Naive thymus-derived CD4-positive, alpha-beta T cell (primary cell): ENCODE measurements at regions of chr22 and their contacts with region 1.

Region 1: DNA sequence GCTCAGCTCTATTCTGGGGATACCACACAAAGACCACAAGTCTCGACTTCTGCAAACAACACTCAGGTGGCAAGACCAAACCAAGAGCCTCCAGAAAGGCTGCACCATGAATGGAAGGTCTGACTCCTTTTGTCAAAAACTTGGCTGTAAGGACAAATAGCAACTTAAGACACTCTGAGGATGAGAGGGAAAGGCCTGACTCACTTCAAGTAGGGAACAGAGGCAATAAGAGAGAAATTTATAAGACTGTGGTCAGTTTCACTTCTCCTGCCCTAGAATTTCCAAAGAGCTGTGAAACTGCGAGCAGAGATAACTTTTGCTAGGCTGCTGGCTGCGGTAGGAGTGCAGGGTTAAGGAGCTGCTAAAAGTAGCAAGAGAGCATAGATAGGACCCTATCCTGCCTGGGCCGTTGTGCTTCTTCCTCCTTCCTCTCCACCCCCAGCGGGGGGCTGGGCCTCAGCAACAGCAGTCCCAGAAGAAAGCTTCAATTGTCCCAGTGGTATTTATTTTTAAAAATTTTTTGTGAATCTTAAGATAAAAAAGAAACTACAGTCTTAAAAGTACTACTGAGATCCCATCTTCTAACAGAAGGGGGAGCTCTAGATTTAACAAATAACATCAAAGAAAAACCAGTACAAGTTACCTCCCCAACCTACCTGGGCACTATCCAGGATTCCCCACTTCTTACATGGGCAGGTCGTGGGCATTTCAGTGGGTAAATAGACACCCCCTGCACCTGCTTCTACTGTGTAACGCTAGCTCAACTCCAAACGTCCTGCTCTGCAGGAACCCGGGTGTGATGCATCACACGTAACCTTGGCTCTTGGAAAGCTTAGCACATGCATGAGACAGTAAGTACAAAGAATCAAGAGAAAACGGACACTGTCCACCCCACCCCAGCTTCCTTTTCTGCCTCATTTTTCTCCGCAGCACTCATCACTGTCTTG is 66.4 kb downstream of the SGSM3 start:
- DNase-seq: peak in 7 of 9 donors; percentile 51 to 73 (median 65)
- ATAC-seq: peak; percentile 79
- H3K4me3 ChIP-seq: no peak overlapping the region
- H3K4me3 Mint-ChIP-seq: peak overlapping the region in 7 of 10 donors; percentile 7 to 73 (median 39)
- H3K27ac ChIP-seq: peak overlapping the region; percentile 24
- H3K27ac Mint-ChIP-seq: peak overlapping the region; percentile 0 to 88 (median 68)
- H3K4me1 ChIP-seq: peaks cover 10 to 23% of the 10 kb centered on the region in 2 donors
- H3K4me1 Mint-ChIP-seq: peaks cover 28 to 77% (median 62%) of the 10 kb centered on the region in 7 donors
- H3K27me3 ChIP-seq: no peaks in the 10 kb centered on the region
- H3K27me3 Mint-ChIP-seq: no peaks in the 10 kb centered on the region

Region 2: GRCh38 chr22:40107851-40108378 is 328.9 kb before region 1 on chr22:
- CTCF ChIA-PET with region 1: no interaction called
- POLR2A ChIA-PET with region 1: no interaction called
- intact Hi-C with region 1: no loop called
- DNase-seq: peak in 2 of 9 donors; percentile 19 to 32
- ATAC-seq: peak; percentile 65
- H3K4me3 ChIP-seq: peak overlapping the region; percentile 16
- H3K4me3 Mint-ChIP-seq: peak overlapping the region; percentile 65 to 91 (median 85)
- H3K27ac ChIP-seq: peak overlapping the region; percentile 63
- H3K27ac Mint-ChIP-seq: peak overlapping the region; percentile 36 to 94 (median 83)
- H3K4me1 ChIP-seq: peaks cover 34 to 45% of the 10 kb centered on the region in 2 donors
- H3K4me1 Mint-ChIP-seq: peaks cover 56 to 95% (median 91%) of the 10 kb centered on the region in 7 donors
- H3K27me3 ChIP-seq: no peaks in the 10 kb centered on the region
- H3K27me3 Mint-ChIP-seq: no peaks in the 10 kb centered on the region

Region 3: DNA sequence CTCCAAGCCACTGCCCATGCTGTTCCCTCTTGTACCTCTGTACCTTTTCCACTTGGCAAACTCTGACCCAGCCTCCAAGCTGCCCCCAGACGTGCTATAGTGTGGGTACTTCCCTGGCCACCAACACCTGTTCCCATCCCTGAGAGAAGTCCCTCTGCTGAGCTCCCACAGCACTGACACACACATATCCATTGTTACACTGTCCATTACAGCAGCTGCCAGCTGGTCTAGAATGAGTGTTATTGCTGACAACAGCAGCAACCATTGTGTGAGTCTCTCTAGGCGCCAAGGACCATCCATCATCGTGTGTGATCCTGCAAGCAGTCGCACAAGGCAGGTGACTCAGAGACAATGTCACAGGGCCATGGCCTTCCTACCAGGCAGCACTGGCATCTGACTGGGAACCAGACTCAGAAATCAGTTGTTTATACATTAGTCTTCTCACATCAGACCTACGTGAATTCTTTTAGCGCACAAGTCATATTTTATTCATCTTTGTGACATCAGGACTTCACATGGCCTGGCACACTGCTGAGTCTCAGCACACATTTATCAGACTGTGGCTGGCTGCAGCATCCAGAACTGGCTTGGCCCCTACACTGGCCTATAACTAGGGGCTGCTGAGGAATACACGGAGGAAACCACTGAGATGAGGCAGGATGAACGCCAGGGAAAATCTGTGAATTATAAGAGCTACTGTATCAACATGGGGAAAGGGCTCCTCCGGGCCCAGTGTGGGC is 10.0 kb before region 1 on chr22:
- CTCF ChIA-PET with region 1: interaction called, 11 read pairs
- POLR2A ChIA-PET with region 1: no interaction called
- intact Hi-C with region 1: no loop called
- DNase-seq: no peak
- ATAC-seq: no peak
- H3K4me3 ChIP-seq: no peak overlapping the region
- H3K4me3 Mint-ChIP-seq: no peak overlapping the region
- H3K27ac ChIP-seq: no peak overlapping the region
- H3K27ac Mint-ChIP-seq: peak overlapping the region in 8 of 9 donors; percentile 34 to 91 (median 80)
- H3K4me1 ChIP-seq: no peaks in the 10 kb centered on the region
- H3K4me1 Mint-ChIP-seq: peaks cover 16 to 51% (median 40%) of the 10 kb centered on the region in 7 donors
- H3K27me3 ChIP-seq: no peaks in the 10 kb centered on the region
- H3K27me3 Mint-ChIP-seq: no peaks in the 10 kb centered on the region

Region 4: GRCh38 chr22:40463017-40463631 is 26.3 kb after region 1 on chr22:
- CTCF ChIA-PET with region 1: interaction called, 6 read pairs
- POLR2A ChIA-PET with region 1: interaction called, 19 read pairs
- intact Hi-C with region 1: loop called (anchors 1 to 2 kb)
- DNase-seq: peak in 8 of 9 donors; percentile 36 to 65 (median 50)
- ATAC-seq: peak; percentile 88
- H3K4me3 ChIP-seq: peak overlapping the region; percentile 90
- H3K4me3 Mint-ChIP-seq: peak overlapping the region; percentile 87 to 97 (median 96)
- H3K27ac ChIP-seq: peak overlapping the region; percentile 80
- H3K27ac Mint-ChIP-seq: peak overlapping the region; percentile 93 to 99 (median 97)
- H3K4me1 ChIP-seq: peaks cover 41 to 53% of the 10 kb centered on the region in 2 donors
- H3K4me1 Mint-ChIP-seq: peaks cover 46 to 92% (median 76%) of the 10 kb centered on the region in 7 donors
- H3K27me3 ChIP-seq: no peaks in the 10 kb centered on the region
- H3K27me3 Mint-ChIP-seq: no peaks in the 10 kb centered on the region

Region 5: DNA sequence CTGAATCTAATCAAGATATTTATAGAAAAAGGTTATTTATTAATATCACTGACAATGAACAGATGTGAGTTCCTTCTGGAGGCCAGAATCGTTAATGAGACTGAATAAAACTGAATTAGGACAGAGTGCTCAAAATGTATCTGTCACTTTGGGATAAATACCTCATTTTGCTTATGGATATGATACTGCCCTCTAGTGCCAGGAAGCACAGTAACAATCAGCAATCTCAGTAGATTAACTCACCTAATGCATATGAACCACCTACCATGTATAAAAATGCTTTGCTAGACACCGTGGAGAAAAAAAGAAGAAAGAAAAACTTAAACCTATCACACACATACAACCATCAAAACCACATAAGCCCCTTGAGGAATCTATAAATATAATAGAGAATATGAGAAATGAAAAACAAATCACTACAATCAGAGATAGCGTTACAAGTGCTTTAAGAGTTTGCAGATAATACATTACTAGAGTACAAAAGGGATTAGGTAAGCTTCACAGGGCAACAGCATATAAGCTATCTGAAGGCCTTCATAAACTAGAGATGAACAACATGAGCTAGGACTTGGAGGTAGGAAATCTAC is 51.0 kb after region 1 on chr22:
- CTCF ChIA-PET with region 1: interaction called, 97 read pairs
- POLR2A ChIA-PET with region 1: interaction called, 8 read pairs
- intact Hi-C with region 1: loop called (anchors 1 kb)
- DNase-seq: peak in 7 of 9 donors; percentile 14 to 51 (median 34)
- ATAC-seq: peak; percentile 71
- H3K4me3 ChIP-seq: no peak overlapping the region
- H3K4me3 Mint-ChIP-seq: no peak overlapping the region
- H3K27ac ChIP-seq: no peak overlapping the region
- H3K27ac Mint-ChIP-seq: peak overlapping the region in 6 of 9 donors; percentile 0 to 29 (median 10)
- H3K4me1 ChIP-seq: peaks cover 0 to 32% of the 10 kb centered on the region in 2 donors
- H3K4me1 Mint-ChIP-seq: peaks cover 30 to 62% (median 52%) of the 10 kb centered on the region in 7 donors
- H3K27me3 ChIP-seq: no peaks in the 10 kb centered on the region
- H3K27me3 Mint-ChIP-seq: no peaks in the 10 kb centered on the region

Region 6: DNA sequence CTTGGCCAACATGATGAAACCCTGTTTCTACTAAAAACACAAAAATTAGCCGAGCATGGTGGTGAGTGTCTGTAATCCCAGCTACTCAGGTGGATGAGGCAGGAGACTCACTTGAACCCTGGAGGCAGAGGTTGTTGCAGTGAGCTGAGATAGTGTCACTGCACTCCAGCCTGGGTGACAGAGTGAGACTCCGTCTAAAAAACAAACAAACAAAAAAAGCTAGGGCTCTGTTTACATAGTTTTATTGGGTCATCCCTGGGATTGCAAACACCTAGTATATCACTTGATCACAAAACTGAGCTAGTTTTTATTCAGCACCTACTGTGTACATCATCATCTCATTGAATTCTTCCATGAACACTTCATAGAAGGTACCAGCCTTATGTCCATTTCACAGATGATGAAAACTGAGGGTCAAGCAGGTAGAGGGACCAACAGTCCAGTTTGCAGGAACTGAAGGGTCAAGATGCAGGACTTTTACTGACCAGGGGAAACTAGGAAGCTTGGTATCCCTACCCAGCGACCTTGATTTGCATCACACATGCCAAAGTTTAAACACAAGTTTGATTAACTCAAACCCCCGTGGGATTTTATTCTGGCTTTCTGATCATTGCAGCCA is 208.9 kb after region 1 on chr22:
- CTCF ChIA-PET with region 1: interaction called, 30 read pairs
- POLR2A ChIA-PET with region 1: interaction called, 3 read pairs
- intact Hi-C with region 1: loop called (anchors 1 kb)
- DNase-seq: no peak
- ATAC-seq: no peak
- H3K4me3 ChIP-seq: no peak overlapping the region
- H3K4me3 Mint-ChIP-seq: peak overlapping the region in 4 of 10 donors; percentile 49 to 70 (median 62)
- H3K27ac ChIP-seq: no peak overlapping the region
- H3K27ac Mint-ChIP-seq: peak overlapping the region in 2 of 9 donors; percentile 69 to 76
- H3K4me1 ChIP-seq: no peaks in the 10 kb centered on the region
- H3K4me1 Mint-ChIP-seq: peaks cover 0 to 19% (median 6%) of the 10 kb centered on the region in 7 donors
- H3K27me3 ChIP-seq: no peaks in the 10 kb centered on the region
- H3K27me3 Mint-ChIP-seq: no peaks in the 10 kb centered on the region